SK-N-SH (cell line): ENCODE measurements at regions of chr18 and their contacts with region 1.

Region 1: GRCh38 chr18:51110073-51110803 is 80.2 kb downstream of the SMAD4 start:
- DNase-seq: peak; percentile 94
- H3K4me3 ChIP-seq: peak overlapping the region in 1 of 2 experiments; percentile 34; a peak in 1 of 4 replicates
- H3K27ac ChIP-seq: no peak overlapping the region
- H3K4me1 ChIP-seq: peaks cover 0 to 2% of the 10 kb centered on the region in 2 experiments; a peak in 1 of 4 replicates
- H3K27me3 ChIP-seq: no peaks in the 10 kb centered on the region
- CTCF ChIP-seq: peak; percentile 82
- EP300 ChIP-seq: no peak
- RAD21 ChIP-seq: peak; percentile 92

Region 2: DNA sequence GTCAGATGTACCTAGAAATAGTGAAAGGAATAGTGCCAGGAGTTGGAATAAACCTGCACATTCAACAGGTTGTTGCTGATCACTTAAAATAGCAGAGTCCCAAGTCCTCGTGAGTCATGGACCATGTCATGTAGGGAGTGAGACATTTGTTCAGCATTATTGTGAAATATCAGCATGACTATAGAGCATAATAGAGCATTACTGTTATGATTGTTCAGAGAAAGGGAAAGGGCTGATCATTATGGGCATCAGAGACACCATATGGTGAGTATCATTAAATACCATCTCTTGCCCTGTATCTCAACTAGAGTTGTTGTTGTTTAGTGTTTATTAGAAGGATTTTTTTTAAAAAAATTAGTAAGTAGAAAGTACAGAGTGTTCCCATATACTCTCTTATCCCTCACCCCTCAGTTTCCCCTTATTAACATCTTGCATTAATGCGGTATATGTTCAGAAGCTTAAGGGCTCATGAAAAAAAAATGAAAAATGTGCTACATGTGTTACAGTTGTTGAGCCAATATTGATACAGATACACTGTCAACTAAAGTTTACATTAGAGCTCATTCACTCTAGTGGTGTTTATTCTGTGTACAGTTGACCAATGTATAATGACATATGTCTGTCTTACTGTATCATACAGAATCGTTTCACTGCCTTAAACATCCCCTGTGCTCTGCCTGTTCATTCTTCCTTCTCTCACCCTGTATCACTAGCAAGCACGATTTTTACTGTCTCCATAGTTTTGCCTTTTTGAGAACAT is 136.7 kb before region 1 on chr18:
- CTCF ChIA-PET with region 1: no interaction called
- POLR2A ChIA-PET with region 1: no interaction called
- DNase-seq: no peak
- H3K4me3 ChIP-seq: no peak overlapping the region
- H3K27ac ChIP-seq: no peak overlapping the region
- H3K4me1 ChIP-seq: peaks cover 4 to 11% of the 10 kb centered on the region in 2 experiments; a peak in 2 of 4 replicates
- H3K27me3 ChIP-seq: no peaks in the 10 kb centered on the region
- CTCF ChIP-seq: no peak
- EP300 ChIP-seq: no peak
- RAD21 ChIP-seq: no peak

Region 3: DNA sequence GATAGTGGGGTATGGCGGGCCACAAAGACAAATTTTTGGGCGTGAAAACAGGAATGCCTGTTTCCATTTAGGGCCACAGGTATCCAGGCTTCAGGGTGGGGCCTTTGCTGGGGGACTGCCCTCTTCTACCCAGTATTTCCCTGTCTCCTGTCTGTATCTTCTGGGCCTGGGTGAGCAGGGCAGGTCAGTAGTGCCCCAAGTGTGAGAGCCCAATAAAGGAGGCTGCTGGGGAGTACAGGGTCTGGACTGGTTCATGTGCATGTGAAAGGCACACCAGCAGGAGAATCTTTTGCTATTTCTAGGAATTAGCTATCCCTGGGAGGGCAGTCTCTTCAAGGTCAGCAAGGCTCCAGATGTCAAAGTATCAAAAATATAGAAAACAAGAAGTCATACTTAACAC is 15.7 kb after region 1 on chr18:
- CTCF ChIA-PET with region 1: interaction called, 18 read pairs
- POLR2A ChIA-PET with region 1: no interaction called
- DNase-seq: no peak
- H3K4me3 ChIP-seq: no peak overlapping the region
- H3K27ac ChIP-seq: no peak overlapping the region
- H3K4me1 ChIP-seq: peaks cover 0 to 2% of the 10 kb centered on the region in 2 experiments; a peak in 1 of 4 replicates
- H3K27me3 ChIP-seq: no peaks in the 10 kb centered on the region
- CTCF ChIP-seq: no peak
- EP300 ChIP-seq: no peak
- RAD21 ChIP-seq: no peak

Region 4: DNA sequence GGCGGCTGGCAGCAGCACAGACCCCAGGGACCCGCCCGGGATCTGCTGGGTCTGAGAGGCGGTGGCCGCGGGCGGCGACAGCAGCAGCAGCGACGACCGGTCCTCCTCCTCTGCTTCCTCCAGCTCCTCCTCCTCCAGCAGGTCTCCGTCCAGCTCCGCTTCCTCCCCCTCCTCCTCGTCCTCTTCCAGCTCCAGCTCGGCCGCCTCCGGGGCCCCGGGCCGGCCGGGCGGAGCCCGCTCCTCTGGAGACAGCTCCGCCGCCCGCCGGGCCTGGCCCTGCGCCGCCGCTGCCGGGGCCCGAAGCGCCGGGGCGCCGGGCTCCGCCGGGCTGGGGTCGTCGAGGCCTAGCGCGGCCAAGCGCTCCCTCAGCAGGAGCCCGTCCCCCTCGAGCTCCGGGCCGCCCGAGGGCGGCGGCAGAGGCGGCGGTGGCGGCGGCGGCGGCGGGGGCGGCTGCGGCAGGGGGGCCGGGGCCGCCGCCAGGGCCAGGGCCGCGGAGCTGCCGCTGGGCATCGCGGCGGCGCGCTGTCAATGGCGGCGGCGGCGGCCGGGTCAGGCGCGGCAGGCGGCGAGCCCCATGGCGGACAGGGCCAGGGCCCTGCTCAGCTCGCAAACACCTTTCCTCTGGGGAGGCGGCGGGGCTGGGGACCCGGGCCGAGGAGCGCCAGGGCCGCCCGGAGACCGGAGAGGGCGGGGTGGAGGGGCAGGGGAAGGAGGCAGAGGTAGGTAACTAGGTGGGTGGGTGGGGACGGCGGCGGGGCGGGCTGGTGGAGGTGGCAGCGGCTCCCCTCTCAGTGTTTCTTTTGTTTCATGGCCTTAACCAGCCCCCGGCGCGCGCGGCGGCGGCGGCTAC is 86.8 kb after region 1 on chr18:
- CTCF ChIA-PET with region 1: interaction called, 13 read pairs
- POLR2A ChIA-PET with region 1: no interaction called
- DNase-seq: peak; percentile 58
- H3K4me3 ChIP-seq: peak overlapping the region; percentile 76 to 98
- H3K27ac ChIP-seq: peak overlapping the region; percentile 71 to 94
- H3K4me1 ChIP-seq: peaks cover 10 to 22% of the 10 kb centered on the region in 2 experiments; a peak in 3 of 4 replicates
- H3K27me3 ChIP-seq: no peaks in the 10 kb centered on the region
- CTCF ChIP-seq: no peak
- EP300 ChIP-seq: no peak
- RAD21 ChIP-seq: no peak

Region 5: DNA sequence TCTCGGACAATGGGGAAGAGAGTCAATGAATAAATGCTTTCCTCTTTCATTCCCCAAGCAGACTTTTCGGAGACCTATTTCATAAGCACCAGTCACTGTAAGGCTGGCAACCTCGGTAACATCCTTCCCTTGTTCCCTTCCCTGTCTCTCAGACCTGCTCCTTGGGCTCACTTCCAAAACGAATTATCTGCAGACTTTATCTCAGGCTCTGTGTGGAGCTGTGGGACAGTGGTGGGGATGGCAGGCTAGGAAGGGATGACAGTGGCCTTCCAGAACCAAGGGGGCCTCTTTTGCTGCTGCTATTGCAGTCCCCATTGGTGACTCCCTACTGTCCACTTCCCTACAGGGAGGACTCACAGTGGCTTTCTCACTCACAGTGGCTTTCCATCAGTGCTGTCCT is 272.9 kb after region 1 on chr18:
- CTCF ChIA-PET with region 1: interaction called, 25 read pairs
- POLR2A ChIA-PET with region 1: no interaction called
- DNase-seq: no peak
- H3K4me3 ChIP-seq: no peak overlapping the region
- H3K27ac ChIP-seq: no peak overlapping the region
- H3K4me1 ChIP-seq: no peaks in the 10 kb centered on the region
- H3K27me3 ChIP-seq: no peaks in the 10 kb centered on the region
- CTCF ChIP-seq: no peak
- EP300 ChIP-seq: no peak
- RAD21 ChIP-seq: no peak

Region 6: GRCh38 chr18:51537487-51537886 is 427.2 kb after region 1 on chr18:
- CTCF ChIA-PET with region 1: interaction called, 11 read pairs
- POLR2A ChIA-PET with region 1: no interaction called
- DNase-seq: peak; percentile 50
- H3K4me3 ChIP-seq: no peak overlapping the region
- H3K27ac ChIP-seq: no peak overlapping the region
- H3K4me1 ChIP-seq: no peaks in the 10 kb centered on the region; a peak in 1 of 4 replicates
- H3K27me3 ChIP-seq: no peaks in the 10 kb centered on the region
- CTCF ChIP-seq: peak; percentile 48
- EP300 ChIP-seq: no peak
- RAD21 ChIP-seq: peak; percentile 69

Region 7: GRCh38 chr18:51668101-51668500 is 557.9 kb after region 1 on chr18:
- CTCF ChIA-PET with region 1: interaction called, 18 read pairs
- POLR2A ChIA-PET with region 1: no interaction called
- DNase-seq: peak; percentile 65
- H3K4me3 ChIP-seq: peak overlapping the region in 1 of 2 experiments; percentile 19; a peak in 1 of 4 replicates
- H3K27ac ChIP-seq: no peak overlapping the region
- H3K4me1 ChIP-seq: peaks cover 0 to 17% of the 10 kb centered on the region in 2 experiments; a peak in 2 of 4 replicates
- H3K27me3 ChIP-seq: no peaks in the 10 kb centered on the region
- CTCF ChIP-seq: peak; percentile 86
- EP300 ChIP-seq: no peak
- RAD21 ChIP-seq: peak; percentile 90